ENCODE measurements at regions of chr2 and their contacts with region 1.

Region 1: GRCh38 chr2:46967990-46968647 is 52.5 kb upstream of the MCFD2 start:
- DNase-seq: peak in 1 of 2 donors; percentile 96
- H3K4me3 ChIP-seq: peak overlapping the region; percentile 32 to 34
- H3K27ac ChIP-seq: peak overlapping the region; percentile 75 to 80
- H3K4me1 ChIP-seq: peaks cover 33 to 64% of the 10 kb centered on the region in 2 donors
- H3K27me3 ChIP-seq: no peaks in the 10 kb centered on the region
- CTCF ChIP-seq: no peak

Region 2: GRCh38 chr2:46942139-46942517 is 26.0 kb before region 1 on chr2:
- intact Hi-C with region 1: loop called (anchors 2 kb)
- DNase-seq: peak in 1 of 2 donors; percentile 79
- H3K4me3 ChIP-seq: peak overlapping the region; percentile 81 to 84
- H3K27ac ChIP-seq: peak overlapping the region; percentile 79 to 81
- H3K4me1 ChIP-seq: peaks cover 5 to 30% of the 10 kb centered on the region in 2 donors
- H3K27me3 ChIP-seq: no peaks in the 10 kb centered on the region
- CTCF ChIP-seq: no peak

Region 3: DNA sequence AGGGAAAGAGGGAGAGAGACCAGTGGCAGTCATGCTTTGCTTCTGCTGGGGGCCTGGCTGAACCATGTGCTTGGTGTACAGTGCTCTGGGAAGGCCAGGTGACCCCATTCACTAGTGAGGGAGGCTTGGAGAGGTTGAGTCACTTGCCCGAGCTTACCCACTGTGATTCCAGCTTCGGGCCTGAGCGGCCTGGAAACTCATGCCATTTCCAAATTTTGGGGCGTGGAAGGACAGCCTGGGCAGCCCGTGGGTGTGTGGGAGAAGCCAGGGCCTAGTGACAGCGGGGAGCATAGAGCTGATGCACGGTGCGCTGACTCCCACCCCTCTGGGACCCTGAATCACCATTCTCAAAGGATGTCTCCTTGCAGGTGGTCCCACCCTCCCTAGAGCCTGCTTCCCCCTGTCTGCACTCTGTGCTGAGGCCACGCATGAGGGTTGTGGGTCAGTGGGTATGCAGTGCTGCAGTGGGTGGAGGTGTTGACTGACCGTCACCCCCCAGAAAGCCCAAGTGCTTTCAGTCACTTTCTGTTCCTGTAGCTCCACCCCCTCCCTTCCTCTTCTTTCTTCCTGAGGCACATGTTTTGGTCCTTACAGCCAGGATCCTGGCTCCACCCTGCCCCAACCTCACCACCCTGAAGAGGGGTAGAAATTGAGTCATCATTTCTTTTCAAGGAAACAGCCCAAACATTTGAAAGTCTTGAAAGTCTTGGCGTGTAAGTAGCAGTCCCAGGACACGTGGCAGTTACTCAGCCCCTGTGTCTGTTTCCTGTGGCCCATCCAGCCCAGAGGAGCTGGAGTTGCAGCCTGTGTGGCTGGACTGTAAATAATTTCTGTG is 16.7 kb after region 1 on chr2:
- intact Hi-C with region 1: loop called (anchors 1 kb)
- DNase-seq: peak; percentile 82 to 94
- H3K4me3 ChIP-seq: no peak overlapping the region
- H3K27ac ChIP-seq: peak overlapping the region; percentile 90 to 93
- H3K4me1 ChIP-seq: peaks cover 28 to 63% of the 10 kb centered on the region in 2 donors
- H3K27me3 ChIP-seq: no peaks in the 10 kb centered on the region
- CTCF ChIP-seq: no peak

Region 4: DNA sequence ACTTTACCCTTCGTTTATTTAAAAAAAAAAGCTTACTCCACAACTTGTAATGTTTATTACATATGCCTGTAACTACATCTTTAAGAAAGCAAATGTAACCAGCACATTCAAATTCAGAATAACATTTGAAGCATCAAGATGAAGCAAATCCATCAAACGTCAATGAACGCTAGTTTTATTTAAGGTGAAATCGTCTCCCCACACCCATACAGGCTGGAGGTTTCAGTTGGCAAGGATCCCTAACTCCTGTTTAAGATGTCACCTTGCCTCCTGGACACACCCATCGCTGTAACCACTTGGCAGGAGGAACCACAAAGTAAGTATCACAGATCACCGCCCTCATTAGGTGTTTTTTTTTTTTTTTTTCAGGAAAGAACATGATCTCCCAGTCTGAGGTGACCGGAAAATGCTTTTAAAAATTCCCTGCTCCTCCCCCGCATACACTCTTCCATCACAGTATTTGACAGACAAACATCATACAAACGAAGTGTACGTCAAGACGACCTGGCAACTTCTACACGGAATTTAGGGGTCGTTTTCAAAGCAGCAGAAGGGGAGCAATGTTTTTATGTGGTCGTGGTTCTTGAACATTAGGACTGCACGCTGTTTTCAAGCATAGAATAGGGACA is 206.7 kb after region 1 on chr2:
- intact Hi-C with region 1: no loop called
- DNase-seq: peak in 1 of 2 donors; percentile 78
- H3K4me3 ChIP-seq: peak overlapping the region; percentile 60 to 80
- H3K27ac ChIP-seq: peak overlapping the region; percentile 98 to 100
- H3K4me1 ChIP-seq: peaks cover 8 to 48% of the 10 kb centered on the region in 2 donors
- H3K27me3 ChIP-seq: no peaks in the 10 kb centered on the region
- CTCF ChIP-seq: no peak

Measured in ascending aorta (tissue), 2 donors.